GM12878 (cell line): ENCODE measurements at regions of chr3 and their contacts with region 1.

Region 1: GRCh38 chr3:52154117-52155094 is at the start of gene POC1A:
- DNase-seq: peak; percentile 86
- ATAC-seq: peak; percentile 92
- H3K4me3 ChIP-seq: peak within 1 kb of the TSS; percentile 76
- H3K27ac ChIP-seq: peak within 1 kb of the TSS; percentile 75
- H3K4me1 ChIP-seq: peaks cover 7% of the 10 kb centered on the region
- H3K27me3 ChIP-seq: no peaks in the 10 kb centered on the region
- CTCF ChIP-seq: no peak
- EP300 ChIP-seq: 0 out of 4 replicates have a peak, but pooled peaks of 1 of the 2 experiments have one; percentile 11
- POLR2A ChIP-seq: peak; percentile 75
- RAD21 ChIP-seq: no peak
- polyA plus RNA-seq, gene POC1A: 8.5 to 13.0 TPM

Region 2: DNA sequence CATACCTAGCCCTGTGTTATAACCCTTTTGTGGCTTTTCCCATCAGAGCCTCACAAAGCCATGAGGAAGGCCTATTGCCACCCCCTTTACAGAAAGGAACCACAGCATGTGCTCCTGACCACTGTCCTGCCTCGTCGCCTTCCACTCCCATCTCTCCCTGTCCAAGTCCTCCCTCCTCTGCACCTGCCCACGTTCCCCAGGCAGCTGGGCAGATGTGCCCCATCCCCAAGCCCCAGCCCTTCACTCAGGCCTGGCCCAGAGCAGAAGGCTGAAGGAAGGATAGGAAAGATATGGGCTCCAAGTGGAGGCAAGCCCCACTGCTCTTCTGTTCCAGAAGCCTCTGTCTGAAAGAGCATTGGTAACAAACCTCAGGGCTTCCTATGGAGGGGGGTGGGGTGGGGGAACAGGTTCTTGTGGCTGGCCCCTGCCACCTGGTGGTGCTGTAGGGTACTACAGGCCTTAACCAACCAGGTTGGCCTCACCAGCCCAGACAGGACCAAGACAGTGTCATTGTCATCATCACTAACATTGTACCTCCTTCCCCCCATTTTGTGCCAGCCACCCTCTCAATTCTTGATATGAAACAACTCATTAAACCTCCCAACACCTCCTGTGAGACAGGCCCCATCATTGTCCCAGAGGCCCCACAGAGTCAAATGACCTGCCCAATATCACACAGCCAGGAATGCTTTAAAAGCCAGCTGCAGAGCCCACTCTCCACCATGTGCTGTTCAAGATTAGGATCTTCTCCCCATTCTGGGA is 10.2 kb before region 1 on chr3:
- CTCF ChIA-PET with region 1: interaction called, 20 read pairs
- POLR2A ChIA-PET with region 1: no interaction called
- RAD21 ChIA-PET with region 1: no interaction called
- SMC1A ChIA-PET with region 1: interaction called, 4 read pairs
- in situ Hi-C with region 1: no loop called
- intact Hi-C with region 1: no loop called
- DNase-seq: no peak
- ATAC-seq: peak; percentile 100
- H3K4me3 ChIP-seq: no peak overlapping the region
- H3K27ac ChIP-seq: no peak overlapping the region
- H3K4me1 ChIP-seq: peaks cover 5% of the 10 kb centered on the region; the same call in 1 of the 2 replicates
- H3K27me3 ChIP-seq: no peaks in the 10 kb centered on the region
- CTCF ChIP-seq: peak; percentile 92 to 97 (median 94); a peak in 5 of 6 replicates
- EP300 ChIP-seq: no peak
- POLR2A ChIP-seq: no peak
- RAD21 ChIP-seq: peak; percentile 93

Region 3: GRCh38 chr3:52197842-52198668 is 43.6 kb after region 1 on chr3 and contains the start of gene ALAS1:
- CTCF ChIA-PET with region 1: interaction called, 11 read pairs
- POLR2A ChIA-PET with region 1: interaction called, 8 read pairs
- RAD21 ChIA-PET with region 1: interaction called, 11 read pairs
- SMC1A ChIA-PET with region 1: interaction called, 5 read pairs
- in situ Hi-C with region 1: no loop called
- intact Hi-C with region 1: loop called (anchors 2 kb)
- DNase-seq: peak; percentile 72
- ATAC-seq: peak; percentile 88
- H3K4me3 ChIP-seq: peak within 1 kb of the TSS; percentile 89
- H3K27ac ChIP-seq: peak within 1 kb of the TSS; percentile 71
- H3K4me1 ChIP-seq: peaks cover 37% of the 10 kb centered on the region
- H3K27me3 ChIP-seq: no peaks in the 10 kb centered on the region
- CTCF ChIP-seq: no peak
- EP300 ChIP-seq: no peak
- POLR2A ChIP-seq: peak; percentile 93
- RAD21 ChIP-seq: no peak
- polyA plus RNA-seq, gene ALAS1: 111 to 115 TPM

Region 4: DNA sequence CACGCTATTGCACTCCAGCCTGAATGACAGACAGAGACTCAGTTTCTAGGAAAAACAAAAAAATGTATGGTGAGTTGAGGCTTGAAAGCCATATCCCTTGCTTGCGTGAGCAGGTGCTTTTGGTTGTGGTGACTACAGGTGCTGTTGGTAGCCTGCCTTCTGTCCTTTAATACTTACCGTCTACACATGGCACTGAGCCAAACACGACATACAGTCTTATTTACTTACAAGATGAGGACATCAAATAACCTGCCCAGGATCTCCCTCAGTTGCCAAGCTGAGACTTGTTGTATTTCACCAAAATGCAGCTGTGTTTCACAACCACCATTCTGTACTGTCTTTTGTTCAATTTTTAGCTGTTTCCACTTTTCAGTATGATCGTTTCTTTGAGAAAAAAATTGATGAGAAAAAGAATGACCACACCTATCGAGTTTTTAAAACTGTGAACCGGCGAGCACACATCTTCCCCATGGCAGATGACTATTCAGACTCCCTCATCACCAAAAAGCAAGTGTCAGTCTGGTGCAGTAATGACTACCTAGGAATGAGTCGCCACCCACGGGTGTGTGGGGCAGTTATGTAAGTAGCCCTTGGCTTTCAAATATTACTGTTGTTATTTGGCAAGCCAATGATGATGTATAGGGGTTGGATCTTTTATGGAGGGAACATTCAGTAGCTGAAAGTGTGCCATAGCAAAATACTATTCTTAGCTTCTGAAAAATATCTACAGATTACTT is 50.1 kb after region 1 on chr3:
- CTCF ChIA-PET with region 1: interaction called, 11 read pairs
- POLR2A ChIA-PET with region 1: interaction called, 8 read pairs
- RAD21 ChIA-PET with region 1: interaction called, 11 read pairs
- SMC1A ChIA-PET with region 1: interaction called, 5 read pairs
- in situ Hi-C with region 1: no loop called
- intact Hi-C with region 1: loop called (anchors 2 kb)
- DNase-seq: no peak
- ATAC-seq: peak; percentile 16; the same call in 1 of the 3 replicates
- H3K4me3 ChIP-seq: peak overlapping the region; percentile 3; the same call in 1 of the 2 replicates
- H3K27ac ChIP-seq: no peak overlapping the region
- H3K4me1 ChIP-seq: peaks cover 21% of the 10 kb centered on the region; the same call in 1 of the 2 replicates
- H3K27me3 ChIP-seq: no peaks in the 10 kb centered on the region
- CTCF ChIP-seq: no peak
- EP300 ChIP-seq: no peak
- POLR2A ChIP-seq: no peak
- RAD21 ChIP-seq: no peak